ENCODE measurements at regions of chr4 and their contacts with region 1.

Region 1: DNA sequence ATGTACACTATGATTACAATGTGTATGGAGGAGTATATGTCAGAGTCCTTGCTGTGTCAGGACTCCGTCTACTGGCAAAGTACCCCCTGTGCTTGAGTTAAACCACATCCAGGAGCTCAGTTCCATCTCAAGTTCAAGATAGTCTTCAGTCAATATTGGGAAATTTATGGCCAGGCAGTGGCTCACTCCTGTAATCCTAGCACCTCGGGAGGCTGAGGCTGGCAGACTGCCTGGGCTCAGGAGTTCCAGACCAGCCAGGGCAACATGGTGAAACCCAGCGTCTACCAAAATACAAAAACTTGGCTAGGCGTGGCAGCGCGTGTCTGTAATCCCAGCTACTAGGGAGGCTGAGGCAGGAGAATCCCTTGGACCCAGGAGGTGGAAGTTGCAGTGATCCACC is 5.8 kb downstream of the SLBP start:
- DNase-seq: no peak
- ATAC-seq: no peak
- H3K4me3 Mint-ChIP-seq: no peak overlapping the region
- H3K27ac Mint-ChIP-seq: no peak overlapping the region
- H3K4me1 Mint-ChIP-seq: peaks cover 77% of the 10 kb centered on the region
- H3K27me3 Mint-ChIP-seq: no peaks in the 10 kb centered on the region

Region 2: GRCh38 chr4:1166509-1167246 is 539.7 kb before region 1 on chr4:
- CTCF ChIA-PET with region 1: no interaction called
- POLR2A ChIA-PET with region 1: no interaction called
- intact Hi-C with region 1: no loop called
- DNase-seq: no peak
- ATAC-seq: no peak
- H3K4me3 Mint-ChIP-seq: peak overlapping the region; percentile 73
- H3K27ac Mint-ChIP-seq: peak overlapping the region; percentile 30
- H3K4me1 Mint-ChIP-seq: peaks cover 22% of the 10 kb centered on the region
- H3K27me3 Mint-ChIP-seq: peaks cover 13% of the 10 kb centered on the region

Region 3: GRCh38 chr4:1726146-1726934 is 20.0 kb after region 1 on chr4:
- CTCF ChIA-PET with region 1: interaction called, 26 read pairs
- POLR2A ChIA-PET with region 1: interaction called, 89 read pairs
- intact Hi-C with region 1: no loop called
- DNase-seq: peak; percentile 93
- ATAC-seq: peak; percentile 10
- H3K4me3 Mint-ChIP-seq: no peak overlapping the region
- H3K27ac Mint-ChIP-seq: peak overlapping the region; percentile 69
- H3K4me1 Mint-ChIP-seq: peaks cover 76% of the 10 kb centered on the region
- H3K27me3 Mint-ChIP-seq: no peaks in the 10 kb centered on the region

Measured in activated CD4-positive, alpha-beta T cell treated with anti-CD3 and anti-CD28 coated beads for 36 hours (primary cell).